Endothelial cell of umbilical vein (primary cell): ENCODE measurements at regions of chr15 and their contacts with region 1.

Region 1: GRCh38 chr15:84911879-84912660 is 27.6 kb downstream of the SLC28A1 start:
- DNase-seq: peak; percentile 99
- H3K4me3 ChIP-seq: no peak overlapping the region
- H3K27ac ChIP-seq: peak overlapping the region; percentile 99
- H3K4me1 ChIP-seq: peaks cover 34% of the 10 kb centered on the region
- H3K27me3 ChIP-seq: no peaks in the 10 kb centered on the region
- CTCF ChIP-seq: no peak
- POLR2A ChIP-seq: peak; percentile 66

Region 2: GRCh38 chr15:84716036-84716799 is 195.9 kb before region 1 on chr15 and contains the start of gene SEC11A:
- CTCF ChIA-PET with region 1: no interaction called
- POLR2A ChIA-PET with region 1: no interaction called
- dilution Hi-C with region 1: no loop called
- intact Hi-C with region 1: loop called (anchors 1 kb)
- DNase-seq: peak; percentile 97
- H3K4me3 ChIP-seq: peak within 1 kb of the TSS; percentile 55 to 95 (median 85)
- H3K27ac ChIP-seq: peak within 1 kb of the TSS; percentile 56
- H3K4me1 ChIP-seq: peaks cover 22% of the 10 kb centered on the region
- H3K27me3 ChIP-seq: no peaks in the 10 kb centered on the region
- CTCF ChIP-seq: no peak
- POLR2A ChIP-seq: peak; percentile 97
- total RNA-seq, gene SEC11A: 192 and 204 TPM in 2 replicates

Region 3: GRCh38 chr15:84818261-84819131 is 93.6 kb before region 1 on chr15:
- CTCF ChIA-PET with region 1: interaction called, 3 read pairs
- POLR2A ChIA-PET with region 1: no interaction called
- dilution Hi-C with region 1: no loop called
- intact Hi-C with region 1: loop called (anchors 2 kb)
- DNase-seq: peak; percentile 91
- H3K4me3 ChIP-seq: peak overlapping the region in 2 of 3 experiments; percentile 57 to 58
- H3K27ac ChIP-seq: peak overlapping the region; percentile 88
- H3K4me1 ChIP-seq: peaks cover 42% of the 10 kb centered on the region
- H3K27me3 ChIP-seq: no peaks in the 10 kb centered on the region
- CTCF ChIP-seq: peak in 1 of 2 donors; percentile 2
- POLR2A ChIP-seq: peak; percentile 71

Region 4: DNA sequence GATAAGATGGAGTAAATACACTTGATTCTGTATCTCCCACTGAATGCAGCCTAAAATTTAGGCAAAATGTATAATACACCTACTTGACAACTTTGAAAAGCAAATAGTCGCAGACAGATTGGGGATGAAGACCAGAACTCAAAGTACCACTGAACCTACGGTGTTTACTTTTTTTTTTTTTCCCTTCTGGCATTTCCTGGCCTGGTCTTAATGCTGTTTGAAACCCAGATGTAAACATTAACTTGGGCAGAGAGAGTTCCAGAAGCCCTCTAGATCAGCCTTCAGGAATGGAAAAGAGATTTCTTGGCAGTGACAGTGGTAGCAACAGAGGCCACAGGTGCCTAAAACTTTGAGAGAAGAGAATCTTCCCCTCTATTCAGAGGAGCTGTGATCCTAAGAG is 67.1 kb before region 1 on chr15:
- CTCF ChIA-PET with region 1: interaction called, 10 read pairs
- POLR2A ChIA-PET with region 1: no interaction called
- dilution Hi-C with region 1: no loop called
- intact Hi-C with region 1: loop called (anchors 1 kb)
- DNase-seq: no peak
- H3K4me3 ChIP-seq: no peak overlapping the region
- H3K27ac ChIP-seq: no peak overlapping the region
- H3K4me1 ChIP-seq: no peaks in the 10 kb centered on the region
- H3K27me3 ChIP-seq: no peaks in the 10 kb centered on the region
- CTCF ChIP-seq: no peak
- POLR2A ChIP-seq: no peak

Region 5: DNA sequence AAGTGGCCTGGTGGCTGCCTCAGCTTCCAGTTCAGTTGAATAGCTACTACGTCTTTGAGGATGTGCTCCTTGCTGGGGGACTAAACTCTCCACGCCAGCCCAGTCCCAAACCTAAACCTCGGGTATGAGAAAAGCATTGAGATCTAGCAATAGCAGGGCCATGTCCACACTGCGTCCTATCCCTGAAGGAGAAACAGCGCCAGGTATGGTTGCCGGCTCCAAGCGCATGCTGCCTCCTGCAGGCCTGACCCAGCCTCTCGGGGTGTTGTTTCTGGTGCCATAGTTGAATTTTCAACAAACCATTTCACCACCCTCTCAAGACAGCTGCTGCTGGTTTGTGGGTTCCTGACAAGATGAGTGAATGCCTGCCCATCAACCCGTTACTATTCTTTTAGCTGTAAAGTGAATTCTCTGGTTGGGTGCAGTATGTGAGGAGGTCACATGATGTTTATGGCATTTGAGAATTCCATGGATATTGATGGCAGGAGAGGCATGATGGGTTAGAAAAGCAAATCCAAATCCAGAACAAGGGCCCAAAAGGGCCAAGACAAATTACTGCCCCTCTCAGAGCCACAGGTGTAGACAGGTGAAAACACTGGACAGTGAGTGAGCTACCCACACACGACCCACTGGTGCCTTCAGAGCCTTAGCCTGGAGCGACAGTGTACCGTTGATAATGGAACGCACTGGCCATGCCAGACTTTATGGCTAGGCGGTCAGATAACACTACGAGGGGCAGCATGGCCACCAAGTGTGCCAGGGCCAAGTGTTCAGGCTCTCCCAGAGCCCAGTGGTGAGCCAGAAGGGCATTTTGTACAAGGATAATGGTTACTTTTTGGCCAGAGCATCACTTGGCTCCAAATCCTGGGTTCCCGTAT is 40.4 kb before region 1 on chr15:
- CTCF ChIA-PET with region 1: interaction called, 11 read pairs
- POLR2A ChIA-PET with region 1: no interaction called
- dilution Hi-C with region 1: no loop called
- intact Hi-C with region 1: loop called (anchors 5 kb)
- DNase-seq: no peak
- H3K4me3 ChIP-seq: no peak overlapping the region
- H3K27ac ChIP-seq: no peak overlapping the region
- H3K4me1 ChIP-seq: no peaks in the 10 kb centered on the region
- H3K27me3 ChIP-seq: no peaks in the 10 kb centered on the region
- CTCF ChIP-seq: no peak
- POLR2A ChIP-seq: no peak

Region 6: GRCh38 chr15:85024509-85025214 is 112.6 kb after region 1 on chr15:
- CTCF ChIA-PET with region 1: no interaction called
- POLR2A ChIA-PET with region 1: no interaction called
- dilution Hi-C with region 1: no loop called
- intact Hi-C with region 1: no loop called
- DNase-seq: no peak
- H3K4me3 ChIP-seq: no peak overlapping the region
- H3K27ac ChIP-seq: no peak overlapping the region
- H3K4me1 ChIP-seq: peaks cover 20% of the 10 kb centered on the region
- H3K27me3 ChIP-seq: no peaks in the 10 kb centered on the region
- CTCF ChIP-seq: no peak
- POLR2A ChIP-seq: no peak

Region 7: DNA sequence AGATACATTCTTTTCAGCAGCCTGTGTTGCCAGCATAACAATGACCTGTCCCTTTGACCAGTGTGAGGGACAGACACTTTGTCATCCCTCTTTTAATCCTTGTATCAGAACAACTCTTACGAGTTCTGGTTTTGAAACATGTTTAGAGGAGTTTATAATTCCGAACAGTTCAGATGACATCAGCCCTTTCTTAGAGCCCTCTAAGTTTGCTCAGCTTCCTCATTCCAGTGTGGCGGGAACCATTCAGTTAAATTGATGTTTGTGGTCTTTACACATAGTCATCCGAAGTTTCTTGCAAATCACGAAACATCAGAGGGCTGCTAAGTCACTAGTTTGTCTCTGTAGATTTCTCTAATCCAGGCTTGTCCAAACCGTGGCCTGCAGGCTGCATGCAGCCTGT is 570.8 kb after region 1 on chr15:
- CTCF ChIA-PET with region 1: no interaction called
- POLR2A ChIA-PET with region 1: no interaction called
- dilution Hi-C with region 1: no loop called
- intact Hi-C with region 1: no loop called
- DNase-seq: no peak
- H3K4me3 ChIP-seq: no peak overlapping the region
- H3K27ac ChIP-seq: no peak overlapping the region
- H3K4me1 ChIP-seq: peaks cover 22% of the 10 kb centered on the region
- H3K27me3 ChIP-seq: no peaks in the 10 kb centered on the region
- CTCF ChIP-seq: no peak
- POLR2A ChIP-seq: no peak